Calu3 (cell line): ENCODE measurements at regions of chr9 and their contacts with region 1.

Region 1: GRCh38 chr9:110443146-110443865 is 105.6 kb upstream of the TXNDC8 start:
- DNase-seq: no peak
- H3K4me3 Mint-ChIP-seq: no peak overlapping the region
- H3K27ac Mint-ChIP-seq: no peak overlapping the region
- H3K4me1 Mint-ChIP-seq: no peaks in the 10 kb centered on the region
- H3K27me3 Mint-ChIP-seq: peaks cover 18% of the 10 kb centered on the region
- CTCF ChIP-seq: no peak

Region 2: GRCh38 chr9:110207071-110207946 is 236.0 kb before region 1 on chr9:
- CTCF ChIA-PET with region 1: no interaction called
- intact Hi-C with region 1: no loop called
- DNase-seq: peak; percentile 52
- H3K4me3 Mint-ChIP-seq: peak overlapping the region; percentile 44
- H3K27ac Mint-ChIP-seq: no peak overlapping the region
- H3K4me1 Mint-ChIP-seq: peaks cover 30% of the 10 kb centered on the region
- H3K27me3 Mint-ChIP-seq: no peaks in the 10 kb centered on the region
- CTCF ChIP-seq: no peak

Region 3: DNA sequence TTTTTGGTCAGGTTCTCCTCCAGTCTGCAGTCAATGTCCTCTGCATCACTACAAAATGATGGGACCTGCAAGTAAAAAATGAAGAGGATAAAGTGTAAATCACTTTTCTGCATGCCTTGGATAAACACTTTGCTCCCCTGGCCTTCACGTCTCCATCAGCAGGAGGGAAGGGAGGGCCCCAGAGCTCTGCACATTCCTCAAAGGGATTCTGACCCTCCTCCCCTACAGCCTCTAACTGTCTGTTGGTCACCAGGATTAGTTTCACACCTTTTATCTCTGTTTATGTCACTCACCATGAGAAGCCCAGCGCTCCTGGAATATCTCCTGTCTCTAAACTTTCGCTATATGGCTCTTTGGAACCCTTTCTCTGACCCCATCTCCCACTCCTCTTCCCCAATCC is 32.9 kb after region 1 on chr9:
- CTCF ChIA-PET with region 1: no interaction called
- intact Hi-C with region 1: no loop called
- DNase-seq: no peak
- H3K4me3 Mint-ChIP-seq: no peak overlapping the region
- H3K27ac Mint-ChIP-seq: no peak overlapping the region
- H3K4me1 Mint-ChIP-seq: no peaks in the 10 kb centered on the region
- H3K27me3 Mint-ChIP-seq: no peaks in the 10 kb centered on the region
- CTCF ChIP-seq: no peak

Region 4: DNA sequence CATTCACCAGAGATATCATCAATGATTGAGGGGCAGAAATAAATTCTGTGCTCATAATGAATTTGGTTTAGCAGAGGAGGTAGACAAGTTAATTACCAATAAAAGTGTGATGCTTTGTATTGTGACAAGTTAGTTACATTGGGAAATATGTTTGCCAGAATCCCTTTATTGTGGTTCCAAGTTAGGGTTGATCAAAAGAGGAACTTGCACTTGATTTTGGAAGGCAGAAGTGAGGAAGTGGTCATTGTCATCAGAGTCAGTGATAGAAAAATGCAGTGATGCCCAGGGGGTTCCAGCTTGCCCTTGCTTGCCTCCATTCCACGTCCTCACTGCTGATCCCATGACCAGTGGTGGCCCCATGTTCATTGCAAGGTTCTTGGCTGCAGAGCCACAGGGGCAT is 66.5 kb after region 1 on chr9:
- CTCF ChIA-PET with region 1: no interaction called
- intact Hi-C with region 1: no loop called
- DNase-seq: no peak
- H3K4me3 Mint-ChIP-seq: no peak overlapping the region
- H3K27ac Mint-ChIP-seq: no peak overlapping the region
- H3K4me1 Mint-ChIP-seq: no peaks in the 10 kb centered on the region
- H3K27me3 Mint-ChIP-seq: peaks cover 26% of the 10 kb centered on the region
- CTCF ChIP-seq: no peak

Region 5: DNA sequence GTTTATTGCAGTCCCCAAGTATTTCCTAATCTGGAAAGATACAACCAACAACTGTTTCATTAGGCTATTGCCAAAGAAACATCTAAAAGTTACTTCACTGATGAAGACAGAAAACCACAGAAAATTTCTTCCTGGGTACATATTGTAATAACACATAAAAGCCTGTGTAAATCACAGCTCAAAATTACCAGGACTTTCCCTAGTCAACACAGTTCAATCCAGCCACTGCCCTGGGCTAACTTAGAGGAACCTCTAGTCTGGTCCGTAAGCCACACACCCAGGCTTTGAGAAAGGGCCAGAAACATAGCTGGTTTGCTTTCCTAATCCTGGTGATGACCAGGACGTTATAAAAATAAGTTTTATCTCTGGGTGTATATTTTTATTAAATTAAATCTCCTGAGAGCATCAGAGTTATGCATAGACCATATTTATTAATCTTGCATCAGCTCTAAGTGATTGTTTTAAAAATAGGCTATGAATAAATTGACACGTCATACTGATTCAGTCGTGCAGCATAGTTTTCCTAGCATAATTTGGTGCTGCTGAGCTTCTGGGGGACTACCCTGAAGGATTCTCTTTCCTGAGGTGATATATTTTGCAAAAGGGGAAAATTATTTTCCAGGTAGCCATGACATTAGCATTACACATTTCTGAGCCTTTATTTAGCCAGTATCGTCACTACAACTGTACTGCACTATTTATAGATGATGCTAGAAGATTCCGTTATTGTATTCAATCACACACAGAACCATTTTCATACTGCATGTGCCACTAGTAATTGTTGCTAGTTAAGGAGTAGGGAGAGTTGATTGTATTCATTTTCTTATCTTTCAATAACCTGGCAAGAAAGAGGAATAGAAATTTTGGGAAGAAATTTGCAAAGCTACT is 212.7 kb after region 1 on chr9:
- CTCF ChIA-PET with region 1: interaction called, 10 read pairs
- intact Hi-C with region 1: no loop called
- DNase-seq: no peak
- H3K4me3 Mint-ChIP-seq: no peak overlapping the region
- H3K27ac Mint-ChIP-seq: no peak overlapping the region
- H3K4me1 Mint-ChIP-seq: no peaks in the 10 kb centered on the region
- H3K27me3 Mint-ChIP-seq: no peaks in the 10 kb centered on the region
- CTCF ChIP-seq: no peak

Region 6: DNA sequence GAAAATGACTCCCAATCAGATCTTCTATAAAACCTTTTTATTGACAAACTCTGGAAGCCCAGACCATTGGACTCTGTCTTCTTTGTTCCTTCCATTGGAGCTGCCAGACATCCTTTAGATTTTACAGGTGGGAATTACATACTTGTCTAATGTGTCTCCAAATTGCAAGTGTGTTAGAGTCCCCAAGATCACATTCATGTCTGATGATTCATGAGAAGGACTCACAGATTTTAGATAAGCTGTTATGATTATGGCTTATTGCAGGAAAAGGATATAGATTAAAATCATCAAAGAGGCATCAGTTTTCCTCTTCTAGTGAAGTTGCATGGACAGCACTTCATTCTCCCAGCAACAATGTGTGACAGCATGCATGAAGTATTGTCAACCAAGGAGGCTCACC is 295.7 kb after region 1 on chr9:
- CTCF ChIA-PET with region 1: no interaction called
- intact Hi-C with region 1: no loop called
- DNase-seq: no peak
- H3K4me3 Mint-ChIP-seq: no peak overlapping the region
- H3K27ac Mint-ChIP-seq: no peak overlapping the region
- H3K4me1 Mint-ChIP-seq: peaks cover 17% of the 10 kb centered on the region
- H3K27me3 Mint-ChIP-seq: no peaks in the 10 kb centered on the region
- CTCF ChIP-seq: no peak